ENCODE measurements at regions of chr19 and their contacts with region 1.

Region 1: GRCh38 chr19:2950286-2951124 is 5.7 kb upstream of the ZNF77 start:
- DNase-seq: peak; percentile 100
- ATAC-seq: peak; percentile 94
- H3K4me3 ChIP-seq: peak overlapping the region; percentile 73 to 91 (median 84)
- H3K4me3 Mint-ChIP-seq: peak overlapping the region; percentile 94
- H3K27ac ChIP-seq: peak overlapping the region; percentile 92 to 98
- H3K27ac Mint-ChIP-seq: peak overlapping the region; percentile 99
- H3K4me1 ChIP-seq: peaks cover 8 to 21% of the 10 kb centered on the region in 2 donors
- H3K4me1 Mint-ChIP-seq: peaks cover 28% of the 10 kb centered on the region
- H3K27me3 ChIP-seq: no peaks in the 10 kb centered on the region
- H3K27me3 Mint-ChIP-seq: no peaks in the 10 kb centered on the region
- CTCF ChIP-seq: no peak

Region 2: DNA sequence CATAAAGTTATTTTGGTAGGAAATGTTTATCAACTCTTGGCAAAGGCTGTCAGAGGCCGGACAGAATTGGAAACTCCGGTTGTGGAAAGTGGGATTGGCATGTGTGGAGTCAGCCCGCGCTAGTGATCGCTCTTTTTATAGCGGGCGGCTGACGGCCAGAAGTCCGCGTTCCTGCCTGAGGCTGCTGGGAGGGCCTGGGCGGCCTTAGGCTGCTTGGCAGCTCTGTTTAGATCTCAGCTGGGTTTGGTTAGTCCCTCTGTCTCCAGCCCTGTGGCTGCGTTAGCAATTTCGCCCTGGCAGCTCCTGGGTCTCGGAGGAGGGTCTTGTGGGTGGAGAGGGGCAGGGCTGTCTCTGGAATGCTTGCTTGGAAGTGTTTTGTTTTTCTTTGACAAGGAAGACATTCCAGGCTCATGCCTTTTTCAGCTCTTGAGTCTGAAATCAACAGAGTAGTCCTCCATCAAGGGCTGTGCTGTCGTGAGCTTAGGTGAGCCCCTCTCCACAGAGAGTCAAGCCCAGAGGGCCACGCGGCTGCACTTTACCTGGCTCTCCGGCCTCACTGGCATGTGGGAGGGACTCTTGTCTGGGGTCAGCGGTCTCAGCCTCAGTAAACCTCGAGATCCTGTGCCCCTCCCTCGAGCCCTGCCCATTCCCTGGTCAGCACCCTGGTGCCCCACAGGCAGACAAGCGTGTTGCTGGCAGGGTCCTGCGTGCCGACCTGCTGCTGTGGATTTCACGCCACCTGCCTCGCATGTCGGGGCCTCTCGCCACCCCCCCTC is 764.2 kb before region 1 on chr19:
- CTCF ChIA-PET with region 1: no interaction called
- POLR2A ChIA-PET with region 1: no interaction called
- intact Hi-C with region 1: no loop called
- DNase-seq: no peak
- ATAC-seq: no peak
- H3K4me3 ChIP-seq: no peak overlapping the region
- H3K4me3 Mint-ChIP-seq: no peak overlapping the region
- H3K27ac ChIP-seq: no peak overlapping the region
- H3K27ac Mint-ChIP-seq: peak overlapping the region; percentile 32
- H3K4me1 ChIP-seq: peaks cover 30 to 40% of the 10 kb centered on the region in 2 donors
- H3K4me1 Mint-ChIP-seq: peaks cover 55% of the 10 kb centered on the region
- H3K27me3 ChIP-seq: no peaks in the 10 kb centered on the region
- H3K27me3 Mint-ChIP-seq: no peaks in the 10 kb centered on the region
- CTCF ChIP-seq: no peak

Region 3: DNA sequence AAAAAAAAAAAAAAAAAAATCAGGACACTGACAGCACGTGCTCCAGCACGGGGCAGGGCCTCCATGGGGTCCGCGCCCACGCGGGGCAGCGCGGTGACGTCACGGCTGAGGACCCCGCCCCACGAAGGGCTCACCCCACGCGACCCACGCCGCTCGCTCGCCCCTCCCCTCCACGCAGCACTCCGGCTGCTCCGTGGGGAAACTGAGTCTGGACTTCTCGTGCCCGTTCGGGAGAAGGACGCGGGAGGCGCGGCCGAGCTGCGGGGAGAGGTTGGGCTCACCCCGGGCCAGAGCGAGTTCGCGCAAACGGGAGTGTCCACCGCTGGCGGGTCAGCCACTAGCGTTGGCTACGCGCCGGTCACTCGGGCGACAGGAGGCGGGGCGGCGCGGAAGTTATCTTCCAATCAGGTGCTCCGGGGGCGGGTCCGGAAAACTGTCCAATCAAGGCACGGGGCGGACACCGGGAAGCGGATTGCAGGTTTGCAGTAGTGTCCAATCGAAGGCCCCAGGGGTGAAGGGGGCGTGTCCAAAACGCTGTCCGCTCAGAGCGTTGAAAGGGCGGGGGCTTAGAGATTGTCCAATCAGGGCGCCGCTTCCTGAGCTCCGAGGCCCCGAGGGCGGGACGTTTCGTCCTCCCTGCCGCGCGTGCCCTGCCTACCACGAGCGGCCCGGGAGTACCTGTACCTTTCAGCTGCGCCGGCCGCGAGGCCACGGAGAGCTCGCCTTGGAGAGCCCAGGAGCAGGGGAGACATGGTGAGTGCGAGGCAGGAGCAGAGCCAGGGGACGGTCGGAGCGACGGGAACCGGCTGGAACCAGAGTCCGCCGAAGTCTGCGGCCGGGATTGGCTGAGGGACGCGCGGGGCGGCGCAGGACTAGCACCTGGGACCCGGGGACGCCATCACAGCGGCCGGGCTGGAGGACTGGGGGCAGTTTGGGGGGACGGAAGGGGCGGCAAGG is 49.9 kb before region 1 on chr19 and contains the start of gene ZNF57:
- CTCF ChIA-PET with region 1: interaction called, 3 read pairs
- POLR2A ChIA-PET with region 1: interaction called, 6 read pairs
- intact Hi-C with region 1: loop called (anchors 1 kb)
- DNase-seq: peak; percentile 98
- ATAC-seq: peak; percentile 99
- H3K4me3 ChIP-seq: peak within 1 kb of the TSS in 4 of 5 experiments; percentile 65 to 86 (median 74)
- H3K4me3 Mint-ChIP-seq: peak within 1 kb of the TSS; percentile 99
- H3K27ac ChIP-seq: peak within 1 kb of the TSS in 1 of 2 donors; percentile 68
- H3K27ac Mint-ChIP-seq: peak within 1 kb of the TSS; percentile 94
- H3K4me1 ChIP-seq: peaks cover 6 to 14% of the 10 kb centered on the region in 2 donors
- H3K4me1 Mint-ChIP-seq: peaks cover 18% of the 10 kb centered on the region
- H3K27me3 ChIP-seq: no peaks in the 10 kb centered on the region
- H3K27me3 Mint-ChIP-seq: no peaks in the 10 kb centered on the region
- CTCF ChIP-seq: no peak
- total RNA-seq, gene ZNF57: 3.4 and 3.8 TPM in 2 replicates

Region 4: DNA sequence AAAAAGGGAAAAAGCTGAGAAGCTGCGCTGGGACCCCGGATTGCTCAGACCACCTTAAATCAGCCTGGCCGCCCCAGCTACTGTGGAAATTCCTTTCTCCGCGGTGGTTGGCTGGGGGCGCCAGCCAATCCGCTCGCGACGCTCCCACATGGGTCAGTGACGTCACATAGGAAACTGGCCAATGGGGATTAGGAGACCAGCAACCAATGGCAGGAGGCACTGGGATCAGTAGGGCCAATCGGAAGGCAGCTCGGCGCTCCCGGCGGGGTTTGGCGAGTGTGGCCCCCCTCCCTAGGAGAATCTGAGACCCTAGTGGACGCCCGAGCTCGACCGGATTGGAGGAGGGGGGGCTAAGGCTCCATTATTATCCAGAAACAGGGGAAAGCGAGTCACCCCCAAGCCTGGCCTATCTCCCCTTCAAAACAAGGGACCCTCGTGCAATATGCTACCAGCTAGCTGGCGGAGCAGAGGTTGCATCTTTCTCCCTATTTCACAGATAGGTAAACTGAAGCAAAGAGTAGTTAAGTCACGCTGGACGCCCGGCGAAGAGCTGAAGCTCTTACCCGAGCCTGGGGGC is 85.1 kb after region 1 on chr19:
- CTCF ChIA-PET with region 1: interaction called, 16 read pairs
- POLR2A ChIA-PET with region 1: interaction called, 8 read pairs
- intact Hi-C with region 1: loop called (anchors 1 kb)
- DNase-seq: peak; percentile 97
- ATAC-seq: peak; percentile 91
- H3K4me3 ChIP-seq: peak overlapping the region; percentile 66 to 93 (median 72)
- H3K4me3 Mint-ChIP-seq: peak overlapping the region; percentile 87
- H3K27ac ChIP-seq: peak overlapping the region; percentile 65 to 78
- H3K27ac Mint-ChIP-seq: peak overlapping the region; percentile 92
- H3K4me1 ChIP-seq: peaks cover 12 to 19% of the 10 kb centered on the region in 2 donors
- H3K4me1 Mint-ChIP-seq: peaks cover 21% of the 10 kb centered on the region
- H3K27me3 ChIP-seq: no peaks in the 10 kb centered on the region
- H3K27me3 Mint-ChIP-seq: peaks cover 10% of the 10 kb centered on the region
- CTCF ChIP-seq: no peak

Region 5: GRCh38 chr19:3102228-3103140 is 152.0 kb after region 1 on chr19:
- CTCF ChIA-PET with region 1: interaction called, 281 read pairs
- POLR2A ChIA-PET with region 1: interaction called, 3 read pairs
- intact Hi-C with region 1: loop called (anchors 1 kb)
- DNase-seq: no peak
- ATAC-seq: no peak
- H3K4me3 ChIP-seq: no peak overlapping the region
- H3K4me3 Mint-ChIP-seq: no peak overlapping the region
- H3K27ac ChIP-seq: no peak overlapping the region
- H3K27ac Mint-ChIP-seq: no peak overlapping the region
- H3K4me1 ChIP-seq: peaks cover 20 to 33% of the 10 kb centered on the region in 2 donors
- H3K4me1 Mint-ChIP-seq: peaks cover 20% of the 10 kb centered on the region
- H3K27me3 ChIP-seq: peaks cover 0 to 10% (median 2%) of the 10 kb centered on the region in 4 experiments
- H3K27me3 Mint-ChIP-seq: peaks cover 5% of the 10 kb centered on the region
- CTCF ChIP-seq: no peak

Region 6: DNA sequence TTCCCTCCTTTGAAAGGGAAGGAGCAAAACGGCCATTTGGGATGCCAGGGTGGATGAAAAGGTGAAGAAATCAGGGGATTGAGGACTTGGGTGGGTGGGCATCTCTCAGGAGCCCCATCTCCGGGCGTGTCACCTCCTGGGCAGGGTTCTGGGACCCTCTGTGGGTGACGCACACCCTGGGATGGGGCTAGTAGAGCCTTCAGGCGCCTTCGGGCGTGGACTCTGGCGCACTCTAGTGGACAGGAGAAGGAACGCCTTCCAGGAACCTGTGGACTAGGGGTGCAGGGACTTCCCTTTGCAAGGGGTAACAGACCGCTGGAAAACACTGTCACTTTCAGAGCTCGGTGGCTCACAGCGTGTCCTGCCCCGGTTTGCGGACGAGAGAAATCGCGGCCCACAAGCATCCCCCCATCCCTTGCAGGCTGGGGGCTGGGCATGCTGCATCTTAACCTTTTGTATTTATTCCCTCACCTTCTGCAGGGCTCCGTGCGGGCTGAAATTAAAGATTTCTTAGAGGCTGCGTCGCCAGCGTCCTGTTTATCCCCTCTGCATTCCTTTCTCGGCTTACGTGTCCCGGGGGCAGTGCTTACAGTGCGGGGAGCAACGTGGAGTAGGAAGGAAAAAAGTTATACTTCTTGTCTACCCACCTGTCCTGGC is 212.9 kb after region 1 on chr19:
- CTCF ChIA-PET with region 1: interaction called, 16 read pairs
- POLR2A ChIA-PET with region 1: interaction called, 6 read pairs
- intact Hi-C with region 1: loop called (anchors 2 kb)
- DNase-seq: peak; percentile 84
- ATAC-seq: peak; percentile 94
- H3K4me3 ChIP-seq: no peak overlapping the region
- H3K4me3 Mint-ChIP-seq: peak overlapping the region; percentile 62
- H3K27ac ChIP-seq: no peak overlapping the region
- H3K27ac Mint-ChIP-seq: peak overlapping the region; percentile 63
- H3K4me1 ChIP-seq: peaks cover 11 to 23% of the 10 kb centered on the region in 2 donors
- H3K4me1 Mint-ChIP-seq: peaks cover 19% of the 10 kb centered on the region
- H3K27me3 ChIP-seq: no peaks in the 10 kb centered on the region
- H3K27me3 Mint-ChIP-seq: no peaks in the 10 kb centered on the region
- CTCF ChIP-seq: peak; percentile 97